ENCODE measurements at regions of chr2 and their contacts with region 1.

Region 1: DNA sequence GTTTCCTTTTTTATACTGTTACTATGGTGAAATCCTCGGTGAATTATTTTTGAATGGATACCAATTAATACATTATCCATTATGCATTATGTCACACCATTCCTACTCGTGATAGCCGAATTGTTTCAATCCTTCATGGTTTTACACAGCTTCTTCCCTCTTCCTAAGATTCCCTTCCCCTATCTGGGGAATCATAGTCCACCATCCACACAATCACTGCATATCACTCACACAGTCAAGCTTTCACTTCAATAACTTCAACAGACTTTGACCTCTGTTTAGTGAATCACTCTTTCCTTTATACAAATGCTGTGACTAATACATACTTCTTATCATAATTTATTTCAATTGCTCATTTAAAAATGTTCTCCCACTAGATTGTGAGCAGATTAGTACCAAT is 1108.1 kb upstream of the LRRTM1 start:
- DNase-seq: no peak
- H3K4me3 ChIP-seq: no peak overlapping the region
- H3K27ac ChIP-seq: no peak overlapping the region
- H3K27me3 ChIP-seq: no peaks in the 10 kb centered on the region
- CTCF ChIP-seq: no peak

Region 2: GRCh38 chr2:81334046-81334445 is 78.6 kb before region 1 on chr2:
- CTCF ChIA-PET with region 1: no interaction called
- POLR2A ChIA-PET with region 1: no interaction called
- DNase-seq: no peak
- H3K4me3 ChIP-seq: no peak overlapping the region
- H3K27ac ChIP-seq: no peak overlapping the region
- H3K27me3 ChIP-seq: no peaks in the 10 kb centered on the region
- CTCF ChIP-seq: no peak

Region 3: GRCh38 chr2:81706856-81707255 is 294.2 kb after region 1 on chr2:
- CTCF ChIA-PET with region 1: interaction called, 10 read pairs
- POLR2A ChIA-PET with region 1: no interaction called
- DNase-seq: no peak
- H3K4me3 ChIP-seq: no peak overlapping the region
- H3K27ac ChIP-seq: no peak overlapping the region
- H3K27me3 ChIP-seq: no peaks in the 10 kb centered on the region
- CTCF ChIP-seq: no peak